CD8-positive, alpha-beta T cell (primary cell): ENCODE measurements at regions of chr13 and their contacts with region 1.

Region 1: GRCh38 chr13:74133657-74134201 is 475 bp downstream of the KLF12 start:
- DNase-seq: peak; percentile 81 to 98 (median 91)
- ATAC-seq: peak; percentile 62
- H3K4me3 ChIP-seq: peak overlapping the region; percentile 80 to 95
- H3K4me3 Mint-ChIP-seq: peak overlapping the region; percentile 95
- H3K27ac ChIP-seq: peak overlapping the region; percentile 82 to 98
- H3K27ac Mint-ChIP-seq: peak overlapping the region; percentile 99
- H3K4me1 ChIP-seq: peaks cover 32% of the 10 kb centered on the region
- H3K4me1 Mint-ChIP-seq: peaks cover 34% of the 10 kb centered on the region
- H3K27me3 ChIP-seq: no peaks in the 10 kb centered on the region
- H3K27me3 Mint-ChIP-seq: no peaks in the 10 kb centered on the region
- CTCF ChIP-seq: no peak

Region 2: GRCh38 chr13:72727417-72728289 is 1406.1 kb before region 1 on chr13 and contains the starts of genes BORA and MZT1:
- CTCF ChIA-PET with region 1: no interaction called
- POLR2A ChIA-PET with region 1: no interaction called
- intact Hi-C with region 1: loop called in 1 of 2 experiments (anchors 5 kb)
- DNase-seq: peak; percentile 88 to 98 (median 94)
- ATAC-seq: peak; percentile 92
- H3K4me3 ChIP-seq: peak within 1 kb of the TSS; percentile 87 to 91
- H3K4me3 Mint-ChIP-seq: peak within 1 kb of the TSS; percentile 95
- H3K27ac ChIP-seq: peak within 1 kb of the TSS; percentile 66 to 70
- H3K27ac Mint-ChIP-seq: peak within 1 kb of the TSS; percentile 84
- H3K4me1 ChIP-seq: peaks cover 25% of the 10 kb centered on the region
- H3K4me1 Mint-ChIP-seq: peaks cover 62% of the 10 kb centered on the region
- H3K27me3 ChIP-seq: no peaks in the 10 kb centered on the region
- H3K27me3 Mint-ChIP-seq: no peaks in the 10 kb centered on the region
- CTCF ChIP-seq: no peak
- total RNA-seq, gene BORA: 3.3 to 3.7 TPM
- total RNA-seq, gene MZT1: 10.0 to 10.4 TPM

Region 3: DNA sequence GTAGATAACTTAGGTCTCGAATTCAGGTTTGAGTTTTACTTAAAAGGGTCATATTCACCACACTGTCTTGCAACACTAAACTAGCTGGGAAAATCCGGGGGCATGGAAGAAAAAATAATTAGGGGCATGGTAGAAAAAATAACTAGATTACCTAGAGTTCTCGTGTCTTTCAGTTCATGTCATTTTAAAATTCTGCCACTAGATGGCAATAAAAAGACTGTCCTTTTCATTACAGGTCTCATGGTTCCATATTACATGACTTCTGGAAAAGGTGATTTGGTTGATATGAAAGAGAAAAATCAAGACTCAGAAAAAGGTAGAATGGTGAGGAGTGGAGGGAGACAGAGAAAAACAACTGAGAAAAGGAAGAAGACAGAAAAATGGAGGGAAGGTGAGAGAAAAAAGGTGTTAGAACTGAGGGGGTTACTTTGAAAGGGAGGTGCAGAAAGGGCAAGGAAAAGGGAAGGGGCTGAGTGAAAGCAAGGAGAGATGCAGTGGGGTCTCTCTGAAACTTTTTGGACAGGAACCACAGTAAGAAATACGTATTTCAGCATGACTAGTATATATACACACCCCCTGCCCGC is 298.5 kb before region 1 on chr13:
- CTCF ChIA-PET with region 1: no interaction called
- POLR2A ChIA-PET with region 1: interaction called, 3 read pairs
- intact Hi-C with region 1: loop called in 1 of 2 experiments (anchors 5 kb)
- DNase-seq: peak in 2 of 9 experiments; percentile 56 to 69
- ATAC-seq: peak; percentile 69
- H3K4me3 ChIP-seq: no peak overlapping the region
- H3K4me3 Mint-ChIP-seq: no peak overlapping the region
- H3K27ac ChIP-seq: no peak overlapping the region
- H3K27ac Mint-ChIP-seq: no peak overlapping the region
- H3K4me1 ChIP-seq: peaks cover 23% of the 10 kb centered on the region
- H3K4me1 Mint-ChIP-seq: peaks cover 66% of the 10 kb centered on the region
- H3K27me3 ChIP-seq: no peaks in the 10 kb centered on the region
- H3K27me3 Mint-ChIP-seq: no peaks in the 10 kb centered on the region
- CTCF ChIP-seq: peak; percentile 90

Region 4: GRCh38 chr13:73954808-73955207 is 178.9 kb before region 1 on chr13:
- CTCF ChIA-PET with region 1: no interaction called
- POLR2A ChIA-PET with region 1: no interaction called
- intact Hi-C with region 1: no loop called
- DNase-seq: no peak
- ATAC-seq: no peak
- H3K4me3 ChIP-seq: no peak overlapping the region
- H3K4me3 Mint-ChIP-seq: no peak overlapping the region
- H3K27ac ChIP-seq: no peak overlapping the region
- H3K27ac Mint-ChIP-seq: no peak overlapping the region
- H3K4me1 ChIP-seq: peaks cover 17% of the 10 kb centered on the region
- H3K4me1 Mint-ChIP-seq: peaks cover 67% of the 10 kb centered on the region
- H3K27me3 ChIP-seq: no peaks in the 10 kb centered on the region
- H3K27me3 Mint-ChIP-seq: no peaks in the 10 kb centered on the region
- CTCF ChIP-seq: no peak

Region 5: DNA sequence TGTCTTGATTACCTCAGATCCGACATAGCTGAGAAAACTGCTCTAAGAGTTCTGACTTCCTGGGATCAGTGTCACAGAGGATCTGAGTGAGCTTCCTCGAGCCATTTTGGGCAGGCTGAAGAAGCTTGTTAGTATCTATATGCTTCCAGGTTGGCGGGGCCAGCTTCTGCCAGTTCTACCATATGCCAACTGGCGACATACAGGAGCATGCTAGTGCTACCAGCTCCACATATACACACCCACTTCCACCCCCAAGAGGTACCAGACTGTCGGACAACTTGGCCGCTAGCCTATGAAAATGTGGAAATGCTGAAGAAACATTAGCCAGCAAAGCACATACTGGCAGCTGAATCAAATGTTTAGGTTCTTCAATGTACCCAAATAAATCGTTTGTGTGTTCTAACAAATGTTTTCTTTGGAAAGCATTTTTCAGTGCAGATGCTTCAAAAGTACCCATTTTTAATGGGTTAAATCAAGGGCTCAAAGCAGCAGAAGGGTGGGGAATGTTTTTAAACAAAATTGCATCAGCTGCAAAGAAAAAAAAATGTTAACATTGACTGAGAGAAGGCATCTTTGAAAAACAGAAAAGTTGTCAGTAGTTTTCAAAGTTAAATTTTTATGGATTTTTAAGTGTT is 163.2 kb before region 1 on chr13:
- CTCF ChIA-PET with region 1: no interaction called
- POLR2A ChIA-PET with region 1: no interaction called
- intact Hi-C with region 1: no loop called
- DNase-seq: no peak
- ATAC-seq: no peak
- H3K4me3 ChIP-seq: no peak overlapping the region
- H3K4me3 Mint-ChIP-seq: no peak overlapping the region
- H3K27ac ChIP-seq: no peak overlapping the region
- H3K27ac Mint-ChIP-seq: no peak overlapping the region
- H3K4me1 ChIP-seq: peaks cover 25% of the 10 kb centered on the region
- H3K4me1 Mint-ChIP-seq: peaks cover 78% of the 10 kb centered on the region
- H3K27me3 ChIP-seq: no peaks in the 10 kb centered on the region
- H3K27me3 Mint-ChIP-seq: no peaks in the 10 kb centered on the region
- CTCF ChIP-seq: no peak

Region 6: DNA sequence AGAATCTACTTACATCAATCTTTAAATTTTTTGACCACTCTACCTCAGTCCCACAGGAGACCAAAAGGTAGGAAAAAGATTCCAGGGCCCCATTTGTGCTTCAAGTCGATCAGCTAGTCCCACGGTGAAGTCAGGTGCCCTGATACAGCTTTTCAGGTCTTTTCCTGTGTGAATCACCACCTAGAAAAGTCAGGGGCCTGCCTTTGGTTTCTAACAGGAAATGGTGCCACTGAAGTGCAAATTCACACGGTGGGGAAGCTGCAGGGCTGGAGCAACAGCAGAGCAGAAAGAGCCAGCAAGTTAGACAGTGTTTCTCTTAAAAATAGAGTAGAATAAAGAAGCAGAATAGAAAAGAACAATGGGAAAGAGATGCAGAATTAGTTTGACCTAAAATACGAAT is 107.0 kb before region 1 on chr13:
- CTCF ChIA-PET with region 1: interaction called, 3 read pairs
- POLR2A ChIA-PET with region 1: interaction called, 7 read pairs
- intact Hi-C with region 1: loop called (anchors 2 to 5 kb)
- DNase-seq: peak; percentile 38 to 89 (median 75)
- ATAC-seq: peak; percentile 95
- H3K4me3 ChIP-seq: peak overlapping the region; percentile 6 to 32
- H3K4me3 Mint-ChIP-seq: peak overlapping the region; percentile 82
- H3K27ac ChIP-seq: peak overlapping the region; percentile 23 to 81
- H3K27ac Mint-ChIP-seq: peak overlapping the region; percentile 94
- H3K4me1 ChIP-seq: peaks cover 64% of the 10 kb centered on the region
- H3K4me1 Mint-ChIP-seq: peaks cover 88% of the 10 kb centered on the region
- H3K27me3 ChIP-seq: no peaks in the 10 kb centered on the region
- H3K27me3 Mint-ChIP-seq: no peaks in the 10 kb centered on the region
- CTCF ChIP-seq: no peak

Region 7: DNA sequence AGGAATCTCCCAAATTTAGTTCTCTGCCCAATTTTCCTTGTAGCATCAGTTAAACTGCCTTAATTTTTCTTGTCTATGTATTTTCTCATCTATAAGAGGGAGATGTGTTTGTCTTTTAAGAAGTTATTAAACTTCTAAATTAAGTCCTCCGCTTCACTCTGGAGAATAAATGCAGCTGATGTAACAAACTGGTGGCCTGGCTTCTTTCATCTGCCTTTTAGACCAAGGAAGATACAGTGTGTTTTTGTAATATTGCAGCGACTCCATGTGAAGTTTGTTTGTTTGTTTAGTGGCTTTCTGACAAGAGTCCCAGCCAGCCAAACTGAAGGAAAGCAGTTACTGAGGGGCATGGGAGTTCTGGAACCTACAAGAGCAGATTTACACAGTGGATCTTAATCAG is 55.9 kb before region 1 on chr13:
- CTCF ChIA-PET with region 1: no interaction called
- POLR2A ChIA-PET with region 1: no interaction called
- intact Hi-C with region 1: no loop called
- DNase-seq: no peak
- ATAC-seq: no peak
- H3K4me3 ChIP-seq: no peak overlapping the region
- H3K4me3 Mint-ChIP-seq: no peak overlapping the region
- H3K27ac ChIP-seq: no peak overlapping the region
- H3K27ac Mint-ChIP-seq: no peak overlapping the region
- H3K4me1 ChIP-seq: peaks cover 35% of the 10 kb centered on the region
- H3K4me1 Mint-ChIP-seq: peaks cover 81% of the 10 kb centered on the region
- H3K27me3 ChIP-seq: no peaks in the 10 kb centered on the region
- H3K27me3 Mint-ChIP-seq: no peaks in the 10 kb centered on the region
- CTCF ChIP-seq: no peak

Region 8: GRCh38 chr13:74090869-74091605 is 42.7 kb before region 1 on chr13:
- CTCF ChIA-PET with region 1: interaction called, 4 read pairs
- POLR2A ChIA-PET with region 1: interaction called, 10 read pairs
- intact Hi-C with region 1: loop called in 1 of 2 experiments (anchors 5 kb)
- DNase-seq: peak in 2 of 9 experiments; percentile 40 to 58
- ATAC-seq: peak; percentile 66
- H3K4me3 ChIP-seq: no peak overlapping the region
- H3K4me3 Mint-ChIP-seq: peak overlapping the region; percentile 9
- H3K27ac ChIP-seq: peak overlapping the region in 1 of 2 experiments; percentile 40
- H3K27ac Mint-ChIP-seq: peak overlapping the region; percentile 60
- H3K4me1 ChIP-seq: peaks cover 56% of the 10 kb centered on the region
- H3K4me1 Mint-ChIP-seq: peaks cover 73% of the 10 kb centered on the region
- H3K27me3 ChIP-seq: no peaks in the 10 kb centered on the region
- H3K27me3 Mint-ChIP-seq: no peaks in the 10 kb centered on the region
- CTCF ChIP-seq: no peak

Region 9: DNA sequence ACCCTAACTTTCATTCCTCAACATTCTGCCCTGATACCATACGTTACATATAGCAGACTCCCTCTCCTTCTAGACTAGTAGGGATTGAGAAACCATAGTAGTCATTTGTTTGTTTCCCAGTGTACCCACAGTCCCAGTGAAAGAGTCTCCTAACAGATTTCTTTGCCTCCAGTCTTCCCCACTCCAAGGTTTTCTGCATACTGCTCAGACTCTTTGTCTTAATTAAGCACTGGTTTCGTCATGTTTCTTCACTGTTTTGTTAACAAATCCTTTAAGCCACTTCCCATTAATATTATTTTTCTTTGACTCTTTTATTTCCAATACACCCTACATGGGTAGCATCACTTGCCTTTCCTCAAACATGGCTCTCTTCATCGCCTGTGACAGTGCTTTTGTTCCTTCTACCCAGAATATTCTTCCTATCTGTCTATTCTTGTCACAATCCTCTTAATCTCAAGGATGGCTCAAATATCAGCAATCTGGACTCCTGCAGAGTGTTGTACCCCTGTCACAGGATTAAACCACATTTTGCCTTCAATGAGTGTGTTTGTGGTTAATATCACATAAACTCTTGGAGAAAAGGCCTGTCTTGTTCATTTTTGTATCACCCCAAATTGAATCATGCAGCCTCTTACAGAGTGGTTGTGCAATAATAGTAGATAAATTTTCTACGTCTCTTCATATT is 93.2 kb after region 1 on chr13:
- CTCF ChIA-PET with region 1: interaction called, 3 read pairs
- POLR2A ChIA-PET with region 1: interaction called, 13 read pairs
- intact Hi-C with region 1: loop called (anchors 2 to 5 kb)
- DNase-seq: no peak
- ATAC-seq: no peak
- H3K4me3 ChIP-seq: no peak overlapping the region
- H3K4me3 Mint-ChIP-seq: no peak overlapping the region
- H3K27ac ChIP-seq: no peak overlapping the region
- H3K27ac Mint-ChIP-seq: no peak overlapping the region
- H3K4me1 ChIP-seq: peaks cover 13% of the 10 kb centered on the region
- H3K4me1 Mint-ChIP-seq: peaks cover 24% of the 10 kb centered on the region
- H3K27me3 ChIP-seq: no peaks in the 10 kb centered on the region
- H3K27me3 Mint-ChIP-seq: no peaks in the 10 kb centered on the region
- CTCF ChIP-seq: no peak